HEK293 (cell line): ENCODE measurements at regions of chr11 and their contacts with region 1.

Region 1: DNA sequence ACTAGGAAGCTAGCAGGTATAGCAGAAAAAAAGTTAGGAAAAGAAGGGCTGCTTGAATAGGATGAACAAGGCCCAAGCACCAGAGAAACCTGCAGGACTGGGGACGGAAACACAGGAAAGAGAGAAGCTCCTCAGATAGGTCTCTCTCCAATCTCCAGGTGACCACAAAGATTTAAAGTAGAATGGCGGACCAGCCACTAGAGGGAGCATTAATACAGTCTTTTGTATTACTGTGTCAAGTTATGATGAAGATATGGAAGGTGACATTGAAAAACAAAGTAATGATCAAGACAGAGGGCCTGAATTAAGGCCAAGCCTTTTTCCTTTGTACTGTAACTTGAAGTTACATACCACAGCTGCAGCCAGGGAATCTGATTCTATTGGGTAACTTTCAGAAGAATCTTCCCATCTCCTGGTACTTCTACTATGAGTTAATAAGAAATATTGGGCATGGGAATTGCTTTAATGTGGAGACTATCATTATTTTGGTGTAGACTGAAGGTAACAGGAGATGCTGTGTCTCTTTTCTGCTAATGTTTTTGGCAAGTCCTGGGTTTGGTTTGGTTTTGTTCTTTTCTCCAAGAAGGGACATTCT is 33.8 kb downstream of the OR2AG2 start:
- H3K4me3 ChIP-seq: no peak overlapping the region
- H3K27ac ChIP-seq: no peak overlapping the region
- H3K4me1 ChIP-seq: no peaks in the 10 kb centered on the region
- CTCF ChIP-seq: no peak

Region 2: DNA sequence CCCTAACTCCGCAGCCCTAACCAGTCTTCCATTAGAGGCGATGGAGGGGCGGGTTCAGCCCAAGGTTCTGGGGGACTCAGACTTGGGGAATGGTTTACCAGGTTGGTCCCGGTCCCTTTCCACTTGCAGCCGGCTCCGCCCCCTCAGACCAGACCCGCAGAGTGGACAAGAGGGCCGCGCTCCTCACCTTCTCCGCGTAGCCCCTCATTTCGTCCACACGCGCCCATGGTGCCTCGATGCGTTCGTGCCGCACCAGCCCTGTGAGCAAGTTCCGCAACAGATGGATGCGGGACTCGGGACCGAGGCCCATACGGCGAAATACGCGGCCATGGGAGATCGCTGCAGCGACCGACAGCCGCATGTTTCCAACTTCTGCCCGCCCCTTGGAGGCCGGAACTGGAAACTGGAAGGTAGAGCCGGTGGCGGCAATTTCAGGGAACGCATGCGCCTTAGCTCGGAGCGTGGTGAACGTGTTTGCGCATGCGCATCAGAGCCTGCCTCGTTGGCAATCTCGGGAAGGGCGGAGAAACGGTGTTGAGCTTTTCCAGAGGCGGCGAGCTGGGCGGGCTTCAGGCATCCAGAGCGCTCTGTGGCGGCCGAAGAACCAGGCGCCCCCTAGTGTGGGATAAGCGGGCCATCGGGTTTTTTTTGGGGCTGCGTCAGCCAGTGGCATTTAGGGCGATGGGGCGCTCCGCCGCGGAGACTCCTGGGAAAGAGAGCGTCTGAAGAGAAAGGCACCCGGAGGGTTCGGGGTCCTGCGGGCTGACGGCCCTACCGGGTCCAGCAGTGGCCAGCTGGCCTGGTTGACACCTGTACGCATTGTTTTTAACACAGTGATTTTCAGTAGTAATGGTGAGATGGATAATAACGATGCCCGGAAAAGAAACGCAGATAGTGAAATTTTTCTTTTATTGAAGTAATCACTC is 54.8 kb before region 1 on chr11 and contains the start of gene MRPL17:
- CTCF ChIA-PET with region 1: no interaction called
- POLR2A ChIA-PET with region 1: no interaction called
- H3K4me3 ChIP-seq: peak within 1 kb of the TSS; percentile 90
- H3K27ac ChIP-seq: peak within 1 kb of the TSS; percentile 70
- H3K4me1 ChIP-seq: no peaks in the 10 kb centered on the region
- CTCF ChIP-seq: peak; percentile 77

Region 3: GRCh38 chr11:6705905-6706535 is 31.9 kb before region 1 on chr11:
- CTCF ChIA-PET with region 1: interaction called, 10 read pairs
- POLR2A ChIA-PET with region 1: no interaction called
- H3K4me3 ChIP-seq: no peak overlapping the region
- H3K27ac ChIP-seq: no peak overlapping the region
- H3K4me1 ChIP-seq: no peaks in the 10 kb centered on the region
- CTCF ChIP-seq: peak; percentile 18; the same call in 1 of the 2 replicates

Region 4: DNA sequence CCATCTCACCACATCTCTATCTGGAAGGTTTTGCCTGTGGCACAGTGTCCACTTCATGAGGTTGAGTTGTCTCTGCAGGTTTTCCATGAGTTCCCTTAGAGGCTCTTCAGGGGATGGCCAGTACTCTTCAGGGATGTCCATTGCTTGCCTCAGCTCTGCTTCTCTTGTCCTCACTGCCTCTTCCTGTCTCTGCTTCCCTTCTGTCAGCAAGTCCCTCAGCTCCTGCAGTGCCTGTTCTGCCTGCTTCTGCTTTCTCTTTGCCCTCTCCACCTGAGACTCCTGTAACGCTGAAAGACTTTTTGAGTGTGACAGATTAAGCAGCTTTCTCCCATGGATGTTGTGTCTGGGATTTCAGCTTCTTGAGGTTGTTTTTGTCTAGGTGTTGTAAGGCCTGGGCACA is 16.6 kb before region 1 on chr11:
- CTCF ChIA-PET with region 1: interaction called, 18 read pairs
- POLR2A ChIA-PET with region 1: no interaction called
- H3K4me3 ChIP-seq: no peak overlapping the region
- H3K27ac ChIP-seq: no peak overlapping the region
- H3K4me1 ChIP-seq: no peaks in the 10 kb centered on the region
- CTCF ChIP-seq: no peak

Region 5: GRCh38 chr11:6757373-6757967 is 19.5 kb after region 1 on chr11:
- CTCF ChIA-PET with region 1: interaction called, 83 read pairs
- POLR2A ChIA-PET with region 1: no interaction called
- H3K4me3 ChIP-seq: no peak overlapping the region
- H3K27ac ChIP-seq: no peak overlapping the region
- H3K4me1 ChIP-seq: no peaks in the 10 kb centered on the region
- CTCF ChIP-seq: peak; percentile 23; the same call in 1 of the 2 replicates

Region 6: GRCh38 chr11:6926208-6927029 is 188.4 kb after region 1 on chr11 and contains the start of gene ZNF215:
- CTCF ChIA-PET with region 1: no interaction called
- POLR2A ChIA-PET with region 1: no interaction called
- H3K4me3 ChIP-seq: peak within 1 kb of the TSS; percentile 71
- H3K27ac ChIP-seq: peak within 1 kb of the TSS; percentile 75
- H3K4me1 ChIP-seq: no peaks in the 10 kb centered on the region
- CTCF ChIP-seq: peak; percentile 24; the same call in 1 of the 2 replicates

Region 7: DNA sequence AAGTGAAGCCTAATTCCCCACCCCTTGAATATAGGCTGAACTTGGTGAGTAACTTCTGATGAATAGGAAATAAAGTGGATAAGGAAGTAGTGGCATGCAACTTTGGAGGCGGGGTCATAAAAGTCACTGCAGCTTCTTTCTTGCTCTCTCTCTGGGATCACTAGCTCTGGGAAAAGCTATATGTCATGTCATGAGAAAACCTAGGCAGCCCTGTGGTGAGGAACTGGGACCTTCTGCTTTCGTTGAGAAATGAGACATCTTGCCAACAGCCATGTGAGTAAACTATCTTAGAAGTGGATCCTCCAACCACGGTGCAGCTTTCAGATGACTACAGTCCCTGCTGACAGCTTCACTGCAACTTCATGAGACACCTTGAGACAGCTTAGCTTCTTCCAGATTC is 266.5 kb after region 1 on chr11:
- CTCF ChIA-PET with region 1: no interaction called
- POLR2A ChIA-PET with region 1: no interaction called
- H3K4me3 ChIP-seq: no peak overlapping the region
- H3K27ac ChIP-seq: no peak overlapping the region
- H3K4me1 ChIP-seq: no peaks in the 10 kb centered on the region
- CTCF ChIP-seq: no peak

Region 8: GRCh38 chr11:7196396-7197146 is 458.6 kb after region 1 on chr11:
- CTCF ChIA-PET with region 1: no interaction called
- POLR2A ChIA-PET with region 1: no interaction called
- H3K4me3 ChIP-seq: no peak overlapping the region
- H3K27ac ChIP-seq: no peak overlapping the region
- H3K4me1 ChIP-seq: 0 out of 2 replicates have a peak, but pooled peaks cover 5% of the 10 kb centered on the region
- CTCF ChIP-seq: no peak